Heart right ventricle (tissue), 16 donors: ENCODE measurements at regions of chr19 and their contacts with region 1.

Region 1: DNA sequence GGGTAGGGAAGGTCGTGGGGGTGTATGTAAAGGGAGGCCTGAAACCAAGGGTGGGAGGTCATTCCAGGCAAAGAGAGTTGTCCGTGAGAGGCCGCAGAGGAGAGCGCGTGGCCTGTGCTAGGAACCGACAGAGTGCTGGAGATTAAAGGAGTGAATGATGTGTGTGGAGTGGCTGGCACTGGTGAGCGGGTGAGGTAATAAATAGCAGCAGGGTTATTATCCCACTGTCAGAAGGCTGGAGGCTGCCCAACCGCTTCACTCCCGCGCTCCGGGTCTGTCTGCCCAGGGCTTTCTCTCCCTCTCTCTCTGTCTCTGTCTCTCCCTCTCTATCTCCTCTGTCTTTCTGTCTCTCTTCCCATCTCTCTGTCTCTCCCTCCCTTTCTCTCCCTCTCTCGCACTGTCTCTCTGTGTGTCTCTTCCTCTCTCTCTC is 17.4 kb downstream of the ZNF579 start:
- DNase-seq: peak; percentile 69 to 77
- ATAC-seq: peak; percentile 88 to 96 (median 92)
- H3K4me3 ChIP-seq: peak overlapping the region in 1 of 10 donors; percentile 50
- H3K27ac ChIP-seq: peak overlapping the region; percentile 52 to 92 (median 80)
- H3K4me1 ChIP-seq: peaks cover 0 to 8% (median 0%) of the 10 kb centered on the region in 9 donors
- H3K27me3 ChIP-seq: peaks cover 0 to 5% (median 0%) of the 10 kb centered on the region in 7 donors
- CTCF ChIP-seq: no peak

Region 2: GRCh38 chr19:55467236-55468053 is 95.8 kb before region 1 on chr19:
- intact Hi-C with region 1: no loop called
- DNase-seq: peak; percentile 57 to 80
- ATAC-seq: peak; percentile 77 to 96 (median 88)
- H3K4me3 ChIP-seq: no peak overlapping the region
- H3K27ac ChIP-seq: peak overlapping the region in 1 of 10 donors; percentile 15
- H3K4me1 ChIP-seq: peaks cover 0 to 13% (median 8%) of the 10 kb centered on the region in 9 donors
- H3K27me3 ChIP-seq: no peaks in the 10 kb centered on the region
- CTCF ChIP-seq: peak; percentile 99 to 100 (median 99)

Region 3: GRCh38 chr19:55516878-55517620 is 46.2 kb before region 1 on chr19:
- intact Hi-C with region 1: no loop called
- DNase-seq: peak; percentile 93 to 96
- ATAC-seq: peak; percentile 98 to 100 (median 99)
- H3K4me3 ChIP-seq: peak overlapping the region in 9 of 10 donors; percentile 29 to 61 (median 59)
- H3K27ac ChIP-seq: peak overlapping the region; percentile 86 to 99 (median 96)
- H3K4me1 ChIP-seq: peaks cover 3 to 22% (median 9%) of the 10 kb centered on the region in 9 donors
- H3K27me3 ChIP-seq: no peaks in the 10 kb centered on the region
- CTCF ChIP-seq: peak; percentile 73 to 92 (median 81)

Region 4: DNA sequence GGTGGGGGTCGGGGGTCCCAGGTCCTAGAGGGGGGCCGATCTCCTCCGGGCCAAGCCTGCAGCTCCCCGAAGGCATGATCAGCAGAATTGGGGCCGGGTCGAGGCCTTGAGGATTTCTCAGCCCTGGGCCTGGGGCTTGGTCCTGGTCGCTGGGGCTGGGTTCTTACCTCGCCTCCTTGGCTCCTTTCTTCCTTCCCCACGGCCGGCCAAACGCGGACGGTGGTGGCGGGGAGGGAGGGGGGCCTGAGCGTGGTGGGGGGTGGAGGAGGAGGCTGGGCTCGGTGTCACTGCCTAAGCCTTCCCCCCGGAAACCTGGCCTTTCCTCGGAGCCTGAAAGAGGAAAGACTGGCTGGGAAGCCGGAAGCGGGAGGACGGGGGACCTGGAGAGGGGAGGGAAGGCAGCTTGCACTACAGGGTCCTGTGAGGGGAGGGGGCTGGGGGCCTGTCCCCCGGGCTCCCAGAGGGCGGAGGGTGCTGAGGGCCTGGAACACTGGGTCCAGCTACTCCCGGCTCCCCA is 17.4 kb after region 1 on chr19 and contains the start of gene ZNF579:
- intact Hi-C with region 1: loop called in 1 of 10 experiments (anchors 1 kb)
- DNase-seq: peak; percentile 87 to 92
- ATAC-seq: peak; percentile 86 to 95 (median 89)
- H3K4me3 ChIP-seq: peak within 1 kb of the TSS; percentile 84 to 100 (median 94)
- H3K27ac ChIP-seq: peak within 1 kb of the TSS; percentile 94 to 99 (median 96)
- H3K4me1 ChIP-seq: peaks cover 0 to 22% (median 16%) of the 10 kb centered on the region in 9 donors
- H3K27me3 ChIP-seq: peaks cover 0 to 10% (median 0%) of the 10 kb centered on the region in 7 donors
- CTCF ChIP-seq: no peak
- total RNA-seq, gene ZNF579: 7.1 to 16.9 (median 9.6) TPM